ENCODE measurements at regions of chr1 and their contacts with region 1.

Region 1: GRCh38 chr1:89688607-89689006 is 55.7 kb downstream of the LRRC8C start:
- DNase-seq: no peak
- H3K4me3 Mint-ChIP-seq: no peak overlapping the region
- H3K27ac Mint-ChIP-seq: peak overlapping the region; percentile 54
- H3K4me1 Mint-ChIP-seq: peaks cover 78% of the 10 kb centered on the region
- H3K27me3 Mint-ChIP-seq: no peaks in the 10 kb centered on the region

Region 2: GRCh38 chr1:89670163-89670562 is 18.4 kb before region 1 on chr1:
- CTCF ChIA-PET with region 1: interaction called, 3 read pairs
- intact Hi-C with region 1: loop called (anchors 1 kb)
- DNase-seq: no peak
- H3K4me3 Mint-ChIP-seq: peak overlapping the region; percentile 16
- H3K27ac Mint-ChIP-seq: peak overlapping the region; percentile 43
- H3K4me1 Mint-ChIP-seq: peaks cover 83% of the 10 kb centered on the region
- H3K27me3 Mint-ChIP-seq: no peaks in the 10 kb centered on the region

Region 3: DNA sequence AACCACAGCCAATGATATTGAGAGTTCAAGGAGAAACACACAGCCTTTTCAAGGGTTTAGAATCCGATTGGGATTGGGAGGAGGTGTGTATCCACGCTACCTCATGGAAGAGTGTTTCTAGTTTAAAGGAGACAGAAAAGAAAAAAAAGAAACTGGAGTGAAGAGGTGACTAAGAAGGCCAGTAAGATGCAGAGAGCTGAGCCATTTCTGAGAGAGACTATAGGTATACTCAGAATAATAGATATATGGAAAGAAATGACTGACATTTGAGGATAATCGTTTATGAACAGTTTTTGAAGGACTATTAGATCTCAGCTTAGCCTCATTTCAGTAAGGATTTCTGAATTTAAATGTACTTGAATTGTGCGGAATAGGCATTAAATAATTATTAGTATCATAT is 12.9 kb before region 1 on chr1:
- CTCF ChIA-PET with region 1: interaction called, 3 read pairs
- intact Hi-C with region 1: loop called (anchors 1 kb)
- DNase-seq: no peak
- H3K4me3 Mint-ChIP-seq: no peak overlapping the region
- H3K27ac Mint-ChIP-seq: peak overlapping the region; percentile 52
- H3K4me1 Mint-ChIP-seq: peaks cover 80% of the 10 kb centered on the region
- H3K27me3 Mint-ChIP-seq: no peaks in the 10 kb centered on the region

Region 4: GRCh38 chr1:89698624-89699023 is 10.0 kb after region 1 on chr1:
- CTCF ChIA-PET with region 1: interaction called, 4 read pairs
- intact Hi-C with region 1: loop called (anchors 1 kb)
- DNase-seq: no peak
- H3K4me3 Mint-ChIP-seq: no peak overlapping the region
- H3K27ac Mint-ChIP-seq: peak overlapping the region; percentile 88
- H3K4me1 Mint-ChIP-seq: peaks cover 83% of the 10 kb centered on the region
- H3K27me3 Mint-ChIP-seq: no peaks in the 10 kb centered on the region

Region 5: GRCh38 chr1:89884718-89885596 is 196.3 kb after region 1 on chr1:
- CTCF ChIA-PET with region 1: no interaction called
- intact Hi-C with region 1: no loop called
- DNase-seq: no peak
- H3K4me3 Mint-ChIP-seq: no peak overlapping the region
- H3K27ac Mint-ChIP-seq: no peak overlapping the region
- H3K4me1 Mint-ChIP-seq: peaks cover 35% of the 10 kb centered on the region
- H3K27me3 Mint-ChIP-seq: no peaks in the 10 kb centered on the region

Region 6: GRCh38 chr1:89974701-89975470 is 286.3 kb after region 1 on chr1:
- CTCF ChIA-PET with region 1: no interaction called
- intact Hi-C with region 1: no loop called
- DNase-seq: no peak
- H3K4me3 Mint-ChIP-seq: no peak overlapping the region
- H3K27ac Mint-ChIP-seq: no peak overlapping the region
- H3K4me1 Mint-ChIP-seq: no peaks in the 10 kb centered on the region
- H3K27me3 Mint-ChIP-seq: no peaks in the 10 kb centered on the region